ENCODE measurements at regions of chr1 and their contacts with region 1.

Region 1: GRCh38 chr1:26787706-26788514 is at the start of gene PIGV:
- DNase-seq: no peak
- ATAC-seq: peak; percentile 78
- H3K4me3 ChIP-seq: peak within 1 kb of the TSS; percentile 72
- H3K27ac ChIP-seq: peak within 1 kb of the TSS; percentile 99
- H3K4me1 ChIP-seq: peaks cover 43% of the 10 kb centered on the region
- H3K27me3 ChIP-seq: no peaks in the 10 kb centered on the region
- CTCF ChIP-seq: no peak
- EP300 ChIP-seq: no peak
- POLR2A ChIP-seq: peak; percentile 73
- RAD21 ChIP-seq: no peak
- polyA plus RNA-seq, gene PIGV: 8.8 to 12.8 TPM

Region 2: DNA sequence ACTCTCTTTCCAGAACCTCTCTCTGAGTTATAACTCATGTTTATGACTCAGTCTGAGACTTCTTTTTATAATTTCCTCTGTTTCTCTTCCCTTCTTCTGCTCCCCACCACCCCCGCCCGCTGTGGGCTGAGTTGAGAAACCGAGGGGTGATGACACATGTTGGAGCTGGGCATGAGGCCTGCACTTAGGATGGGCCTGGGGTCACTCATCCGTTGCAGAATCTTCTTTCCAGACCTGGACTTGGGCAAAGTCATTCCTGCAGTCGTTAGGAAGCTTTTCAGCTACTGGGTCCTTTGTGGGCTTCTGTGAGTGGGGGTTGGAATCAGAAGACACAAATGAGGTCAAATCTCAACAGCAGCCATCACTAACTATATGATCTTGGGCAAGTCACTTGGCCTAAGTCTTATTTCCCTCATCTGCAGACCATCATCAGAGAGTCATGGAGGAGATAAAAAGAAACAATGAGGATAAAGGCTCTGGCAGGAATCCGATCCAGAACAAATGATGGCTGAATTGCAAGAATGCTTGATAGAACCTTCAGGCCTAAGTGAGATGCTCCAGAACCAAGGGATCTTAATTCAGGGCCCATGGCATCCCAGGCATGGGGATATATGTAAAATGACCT is 205.0 kb before region 1 on chr1:
- CTCF ChIA-PET with region 1: interaction called, 10 read pairs
- POLR2A ChIA-PET with region 1: interaction called, 5 read pairs
- RAD21 ChIA-PET with region 1: interaction called, 18 read pairs
- SMC1A ChIA-PET with region 1: interaction called, 15 read pairs
- in situ Hi-C with region 1: no loop called
- intact Hi-C with region 1: no loop called
- DNase-seq: peak; percentile 56
- ATAC-seq: peak; percentile 67
- H3K4me3 ChIP-seq: no peak overlapping the region
- H3K27ac ChIP-seq: peak overlapping the region; percentile 87
- H3K4me1 ChIP-seq: peaks cover 56% of the 10 kb centered on the region
- H3K27me3 ChIP-seq: no peaks in the 10 kb centered on the region
- CTCF ChIP-seq: no peak
- EP300 ChIP-seq: peak in 1 of 2 experiments; percentile 70; a peak in 1 of 4 replicates
- POLR2A ChIP-seq: no peak
- RAD21 ChIP-seq: no peak

Region 3: GRCh38 chr1:26677306-26678115 is 110.4 kb before region 1 on chr1:
- CTCF ChIA-PET with region 1: interaction called, 96 read pairs
- POLR2A ChIA-PET with region 1: interaction called, 17 read pairs
- RAD21 ChIA-PET with region 1: interaction called, 65 read pairs
- SMC1A ChIA-PET with region 1: interaction called, 146 read pairs
- in situ Hi-C with region 1: no loop called
- intact Hi-C with region 1: loop called (anchors 1 kb)
- DNase-seq: peak; percentile 87
- ATAC-seq: peak; percentile 99
- H3K4me3 ChIP-seq: no peak overlapping the region
- H3K27ac ChIP-seq: peak overlapping the region; percentile 11; the same call in 1 of the 2 replicates
- H3K4me1 ChIP-seq: peaks cover 10% of the 10 kb centered on the region
- H3K27me3 ChIP-seq: no peaks in the 10 kb centered on the region
- CTCF ChIP-seq: peak; percentile 71 to 84 (median 73)
- EP300 ChIP-seq: no peak
- POLR2A ChIP-seq: no peak
- RAD21 ChIP-seq: peak; percentile 84

Region 4: DNA sequence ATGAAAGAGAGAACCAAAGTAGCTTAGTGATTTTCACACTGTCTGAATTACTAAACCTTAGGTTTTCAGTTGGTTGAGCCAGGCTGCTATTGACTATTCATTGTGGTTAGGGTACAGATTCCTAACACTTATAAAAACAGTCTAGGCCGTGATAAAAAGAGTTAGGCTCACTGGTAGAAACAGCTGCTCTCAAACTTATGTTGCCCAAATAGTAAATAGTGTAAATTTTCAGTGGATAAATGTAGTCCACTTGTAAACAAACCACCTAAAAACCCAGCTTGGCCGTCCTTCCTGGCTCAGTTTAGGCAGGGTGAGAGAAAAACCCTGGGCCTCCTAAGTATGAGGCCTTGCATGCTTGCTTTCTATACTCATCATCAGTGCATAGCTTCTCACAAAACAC is 57.2 kb before region 1 on chr1:
- CTCF ChIA-PET with region 1: interaction called, 11 read pairs
- POLR2A ChIA-PET with region 1: no interaction called
- RAD21 ChIA-PET with region 1: interaction called, 11 read pairs
- SMC1A ChIA-PET with region 1: interaction called, 28 read pairs
- in situ Hi-C with region 1: no loop called
- intact Hi-C with region 1: no loop called
- DNase-seq: no peak
- ATAC-seq: no peak
- H3K4me3 ChIP-seq: no peak overlapping the region
- H3K27ac ChIP-seq: no peak overlapping the region
- H3K4me1 ChIP-seq: peaks cover 17% of the 10 kb centered on the region
- H3K27me3 ChIP-seq: no peaks in the 10 kb centered on the region
- CTCF ChIP-seq: no peak
- EP300 ChIP-seq: no peak
- POLR2A ChIP-seq: no peak
- RAD21 ChIP-seq: no peak

Region 5: GRCh38 chr1:26811057-26811456 is 23.1 kb after region 1 on chr1:
- CTCF ChIA-PET with region 1: interaction called, 40 read pairs
- POLR2A ChIA-PET with region 1: interaction called, 8 read pairs
- RAD21 ChIA-PET with region 1: interaction called, 34 read pairs
- SMC1A ChIA-PET with region 1: interaction called, 10 read pairs
- in situ Hi-C with region 1: no loop called
- intact Hi-C with region 1: no loop called
- DNase-seq: no peak
- ATAC-seq: 0 out of 3 replicates have a peak, but pooled peaks have one; percentile 20
- H3K4me3 ChIP-seq: no peak overlapping the region
- H3K27ac ChIP-seq: no peak overlapping the region
- H3K4me1 ChIP-seq: no peaks in the 10 kb centered on the region
- H3K27me3 ChIP-seq: no peaks in the 10 kb centered on the region
- CTCF ChIP-seq: no peak
- EP300 ChIP-seq: no peak
- POLR2A ChIP-seq: no peak
- RAD21 ChIP-seq: no peak

Region 6: DNA sequence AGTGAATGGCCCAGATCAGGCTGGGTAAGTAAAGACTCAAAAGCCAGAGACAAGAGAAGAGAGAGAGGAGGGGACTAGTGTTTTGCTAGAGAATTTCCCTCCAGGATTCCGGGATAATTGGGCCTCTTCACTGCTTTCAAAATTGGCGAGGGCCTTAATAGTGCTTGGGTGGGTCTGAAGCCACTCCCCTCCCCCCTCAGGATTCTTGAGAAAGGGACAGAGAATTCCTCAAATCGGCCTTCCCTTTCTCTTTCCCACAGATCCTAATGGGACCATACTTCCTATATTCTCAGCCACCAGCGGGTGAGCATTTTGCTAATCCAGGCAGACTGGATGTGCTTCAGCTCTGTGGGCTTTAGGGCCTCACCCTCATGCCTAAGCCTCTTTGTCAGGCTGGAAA is 87.0 kb after region 1 on chr1:
- CTCF ChIA-PET with region 1: interaction called, 18 read pairs
- POLR2A ChIA-PET with region 1: no interaction called
- RAD21 ChIA-PET with region 1: interaction called, 13 read pairs
- SMC1A ChIA-PET with region 1: interaction called, 19 read pairs
- in situ Hi-C with region 1: no loop called
- intact Hi-C with region 1: loop called (anchors 5 kb)
- DNase-seq: no peak
- ATAC-seq: no peak
- H3K4me3 ChIP-seq: no peak overlapping the region
- H3K27ac ChIP-seq: no peak overlapping the region
- H3K4me1 ChIP-seq: no peaks in the 10 kb centered on the region
- H3K27me3 ChIP-seq: no peaks in the 10 kb centered on the region
- CTCF ChIP-seq: no peak
- EP300 ChIP-seq: no peak
- POLR2A ChIP-seq: no peak
- RAD21 ChIP-seq: no peak

Region 7: DNA sequence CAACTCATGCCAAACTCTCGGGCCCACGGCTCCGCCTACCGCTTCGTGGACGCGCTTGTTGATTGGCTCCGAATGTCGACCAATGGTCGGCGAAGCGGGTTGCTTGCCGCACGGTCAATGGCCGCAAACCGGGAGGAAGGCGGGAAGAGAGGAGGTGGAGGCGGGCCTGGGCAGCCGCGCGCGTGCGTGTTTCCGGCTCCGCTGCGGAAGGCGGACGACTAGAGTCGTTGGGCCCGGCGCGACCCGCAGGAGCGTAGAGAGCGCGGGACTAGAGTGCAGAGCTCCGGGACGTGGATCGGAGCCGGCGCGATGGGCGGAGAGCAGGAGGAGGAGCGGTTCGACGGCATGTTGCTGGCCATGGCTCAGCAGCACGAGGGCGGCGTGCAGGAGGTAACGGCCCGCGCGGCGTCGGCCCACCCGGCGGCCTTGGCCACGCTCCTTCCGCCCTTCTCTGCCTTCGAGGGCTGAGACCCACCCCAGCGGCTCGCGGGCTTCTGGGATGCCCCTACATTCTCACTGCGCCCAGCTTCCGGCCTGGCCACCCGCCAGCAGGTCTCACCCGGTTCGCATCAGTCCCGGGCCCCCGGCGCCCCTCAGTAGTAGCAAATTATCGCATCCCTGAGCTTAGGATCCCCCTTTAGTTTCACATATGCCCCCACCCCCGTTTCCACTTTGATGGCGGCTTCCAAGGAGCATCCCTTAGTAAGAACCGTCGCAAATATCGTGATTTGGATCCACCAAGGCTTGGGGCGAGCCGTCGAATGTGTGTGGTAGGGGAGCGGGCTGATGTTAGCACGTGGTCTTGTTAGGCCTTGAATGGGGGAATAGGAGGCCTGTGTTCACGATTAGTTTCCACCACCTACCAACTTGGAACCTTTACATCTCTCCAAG is 133.9 kb after region 1 on chr1 and contains the start of gene NUDC:
- CTCF ChIA-PET with region 1: no interaction called
- POLR2A ChIA-PET with region 1: no interaction called
- RAD21 ChIA-PET with region 1: no interaction called
- SMC1A ChIA-PET with region 1: no interaction called
- in situ Hi-C with region 1: no loop called
- intact Hi-C with region 1: no loop called
- DNase-seq: peak; percentile 88
- ATAC-seq: peak; percentile 99
- H3K4me3 ChIP-seq: peak within 1 kb of the TSS; percentile 76
- H3K27ac ChIP-seq: peak within 1 kb of the TSS; percentile 83
- H3K4me1 ChIP-seq: peaks cover 5% of the 10 kb centered on the region; the same call in 1 of the 2 replicates
- H3K27me3 ChIP-seq: no peaks in the 10 kb centered on the region
- CTCF ChIP-seq: no peak
- EP300 ChIP-seq: no peak
- POLR2A ChIP-seq: peak; percentile 98
- RAD21 ChIP-seq: no peak
- polyA plus RNA-seq, gene NUDC: 5.5 to 15.1 TPM

Measured in GM12878 (cell line).